Heart right ventricle (tissue), 16 donors: ENCODE measurements at regions of chr13 and their contacts with region 1.

Region 1: GRCh38 chr13:108889324-108889984 is 260.0 kb downstream of the MYO16 start:
- DNase-seq: no peak
- ATAC-seq: no peak
- H3K4me3 ChIP-seq: no peak overlapping the region
- H3K27ac ChIP-seq: no peak overlapping the region
- H3K4me1 ChIP-seq: no peaks in the 10 kb centered on the region
- H3K27me3 ChIP-seq: peaks cover 0 to 3% (median 0%) of the 10 kb centered on the region in 7 donors
- CTCF ChIP-seq: no peak

Region 2: DNA sequence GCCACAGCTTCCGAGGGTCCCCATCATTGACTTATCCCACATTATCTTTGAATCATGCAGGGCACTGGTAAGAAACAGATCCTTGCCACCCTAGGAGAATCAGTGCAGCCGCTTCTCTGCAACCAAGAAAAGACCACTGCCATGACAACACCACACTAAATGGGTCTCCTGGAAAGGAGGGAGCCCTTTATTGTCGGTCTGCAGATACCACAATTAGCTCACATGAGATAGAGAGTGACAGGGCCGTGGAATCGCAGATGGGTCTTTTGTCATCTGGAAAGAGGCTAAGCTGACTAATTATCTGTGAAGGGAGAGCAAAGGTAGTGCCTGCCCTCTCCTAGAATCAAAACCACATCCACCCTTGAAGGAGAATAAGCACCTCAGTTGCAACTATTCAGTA is 438.3 kb before region 1 on chr13:
- intact Hi-C with region 1: no loop called
- DNase-seq: no peak
- ATAC-seq: no peak
- H3K4me3 ChIP-seq: no peak overlapping the region
- H3K27ac ChIP-seq: no peak overlapping the region
- H3K4me1 ChIP-seq: no peaks in the 10 kb centered on the region
- H3K27me3 ChIP-seq: peaks cover 0 to 11% (median 0%) of the 10 kb centered on the region in 7 donors
- CTCF ChIP-seq: no peak

Region 3: GRCh38 chr13:108609353-108609752 is 280.1 kb before region 1 on chr13:
- intact Hi-C with region 1: loop called in 7 of 10 experiments (anchors 2 to 10 kb)
- DNase-seq: no peak
- ATAC-seq: peak in 2 of 8 donors; percentile 64 to 69
- H3K4me3 ChIP-seq: no peak overlapping the region
- H3K27ac ChIP-seq: no peak overlapping the region
- H3K4me1 ChIP-seq: peaks cover 0 to 7% (median 0%) of the 10 kb centered on the region in 9 donors
- H3K27me3 ChIP-seq: no peaks in the 10 kb centered on the region
- CTCF ChIP-seq: peak; percentile 19 to 63 (median 56)

Region 4: DNA sequence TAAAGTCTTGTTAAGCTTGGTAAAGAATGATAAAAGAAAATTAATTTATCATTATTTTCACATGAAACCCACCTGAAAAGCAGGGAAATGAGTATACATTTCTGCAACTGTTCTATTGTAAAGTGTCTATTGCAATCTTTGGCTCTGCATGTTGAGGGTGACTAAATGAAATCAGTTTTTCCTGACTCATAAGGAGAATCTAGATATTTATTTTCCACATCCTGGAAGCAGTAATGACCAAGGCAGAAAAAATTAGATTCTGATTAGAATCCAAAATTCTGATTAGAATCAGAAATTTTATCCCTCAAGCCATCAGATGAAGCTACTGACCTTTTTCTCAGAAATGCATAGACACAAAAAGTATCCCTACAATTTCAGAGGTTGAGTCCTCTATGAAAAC is 81.6 kb before region 1 on chr13:
- intact Hi-C with region 1: no loop called
- DNase-seq: no peak
- ATAC-seq: no peak
- H3K4me3 ChIP-seq: no peak overlapping the region
- H3K27ac ChIP-seq: no peak overlapping the region
- H3K4me1 ChIP-seq: no peaks in the 10 kb centered on the region
- H3K27me3 ChIP-seq: no peaks in the 10 kb centered on the region
- CTCF ChIP-seq: no peak

Region 5: GRCh38 chr13:108877300-108877699 is 12.2 kb before region 1 on chr13:
- intact Hi-C with region 1: no loop called
- DNase-seq: no peak
- ATAC-seq: peak; percentile 46 to 97 (median 84)
- H3K4me3 ChIP-seq: no peak overlapping the region
- H3K27ac ChIP-seq: no peak overlapping the region
- H3K4me1 ChIP-seq: peaks cover 0 to 4% (median 0%) of the 10 kb centered on the region in 9 donors
- H3K27me3 ChIP-seq: no peaks in the 10 kb centered on the region
- CTCF ChIP-seq: no peak